Caco-2 (cell line): ENCODE measurements at regions of chr13 and their contacts with region 1.

Region 1: GRCh38 chr13:98896634-98897155 is 81.2 kb downstream of the DOCK9 start:
- DNase-seq: peak; percentile 47 to 57
- H3K4me3 ChIP-seq: no peak overlapping the region
- H3K4me3 Mint-ChIP-seq: peak overlapping the region; percentile 8
- H3K27ac Mint-ChIP-seq: peak overlapping the region; percentile 63
- H3K4me1 ChIP-seq: peaks cover 37% of the 10 kb centered on the region
- H3K4me1 Mint-ChIP-seq: peaks cover 28% of the 10 kb centered on the region
- H3K27me3 ChIP-seq: no peaks in the 10 kb centered on the region
- H3K27me3 Mint-ChIP-seq: no peaks in the 10 kb centered on the region
- CTCF ChIP-seq: no peak

Region 2: DNA sequence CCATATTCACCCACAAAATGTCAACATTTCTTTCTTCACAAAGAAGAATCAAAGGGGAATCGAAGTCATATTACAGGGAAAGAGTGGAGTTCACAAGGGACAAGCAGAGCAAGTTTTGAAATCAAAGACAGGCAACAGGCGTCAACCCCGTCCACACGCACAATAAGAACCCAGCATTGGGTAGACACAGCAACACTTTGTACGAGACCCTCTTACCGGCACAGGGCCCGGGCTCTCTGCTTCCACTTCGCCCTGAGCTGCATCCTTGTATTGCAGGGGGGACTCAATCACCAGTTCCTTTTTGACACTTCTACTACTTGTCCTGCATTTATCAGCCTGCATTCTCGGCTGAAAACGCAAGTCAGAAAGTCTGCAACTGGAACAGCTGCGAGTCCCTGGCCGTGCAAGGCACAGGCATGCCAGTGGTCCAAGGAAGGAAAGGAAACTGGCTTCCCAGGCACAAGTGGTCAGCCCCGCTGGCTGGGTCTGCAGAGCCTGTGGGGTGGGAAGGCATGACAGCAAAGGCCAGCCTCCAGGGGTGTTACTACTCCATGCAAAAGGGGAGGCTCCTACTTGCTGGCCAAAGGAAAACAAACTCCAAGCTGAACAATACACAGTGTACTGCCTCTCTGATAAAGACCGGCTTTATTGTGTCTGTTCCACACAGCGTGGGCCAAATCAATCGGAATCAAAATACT is 81.0 kb after region 1 on chr13 and contains the start of gene DOCK9:
- CTCF ChIA-PET with region 1: interaction called, 5 read pairs
- POLR2A ChIA-PET with region 1: no interaction called
- intact Hi-C with region 1: loop called (anchors 1 kb)
- DNase-seq: peak; percentile 63 to 68
- H3K4me3 ChIP-seq: peak within 1 kb of the TSS; percentile 11
- H3K4me3 Mint-ChIP-seq: peak within 1 kb of the TSS; percentile 77
- H3K27ac Mint-ChIP-seq: peak within 1 kb of the TSS; percentile 88
- H3K4me1 ChIP-seq: peaks cover 50% of the 10 kb centered on the region
- H3K4me1 Mint-ChIP-seq: peaks cover 49% of the 10 kb centered on the region
- H3K27me3 ChIP-seq: no peaks in the 10 kb centered on the region
- H3K27me3 Mint-ChIP-seq: no peaks in the 10 kb centered on the region
- CTCF ChIP-seq: no peak
- total RNA-seq, gene DOCK9: 219 and 260 TPM in 2 replicates